GM23248 (cell line): ENCODE measurements at regions of chr5 and their contacts with region 1.

Region 1: GRCh38 chr5:175729829-175730277 is 72.0 kb downstream of the HRH2 start:
- DNase-seq: peak; percentile 87
- H3K4me3 ChIP-seq: no peak overlapping the region
- H3K27ac ChIP-seq: no peak overlapping the region
- H3K4me1 ChIP-seq: no peaks in the 10 kb centered on the region
- H3K27me3 ChIP-seq: peaks cover 4% of the 10 kb centered on the region; the same call in 1 of the 2 replicates

Region 2: DNA sequence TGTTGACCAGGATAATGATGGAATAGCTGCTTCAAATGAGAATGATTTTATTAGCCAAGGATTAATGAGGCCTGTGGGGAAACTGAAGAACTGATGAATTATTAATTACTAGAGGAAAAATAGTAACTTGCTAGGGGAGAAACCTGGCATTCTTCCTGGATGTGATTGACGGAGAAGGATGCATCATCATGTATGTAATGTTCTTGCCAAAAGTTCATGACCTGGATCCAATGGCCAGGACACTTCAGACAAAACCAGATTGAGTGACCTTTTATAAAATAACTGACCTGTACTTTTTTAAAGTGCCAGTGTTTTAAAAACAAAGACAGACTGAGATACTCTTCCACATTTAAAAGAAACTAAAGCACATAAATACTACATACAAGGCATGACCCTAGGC is 608.1 kb after region 1 on chr5:
- in situ Hi-C with region 1: loop called (anchors 25 kb)
- DNase-seq: no peak
- H3K4me3 ChIP-seq: no peak overlapping the region
- H3K27ac ChIP-seq: no peak overlapping the region
- H3K4me1 ChIP-seq: no peaks in the 10 kb centered on the region
- H3K27me3 ChIP-seq: no peaks in the 10 kb centered on the region